Heart left ventricle (tissue), 16 donors: ENCODE measurements at regions of chr12 and their contacts with region 1.

Region 1: GRCh38 chr12:48765753-48766162 is 23.1 kb downstream of the ADCY6 start:
- DNase-seq: no peak
- ATAC-seq: peak in 1 of 4 donors; percentile 4
- H3K4me3 ChIP-seq: no peak overlapping the region
- H3K27ac ChIP-seq: peak overlapping the region in 6 of 12 donors; percentile 43 to 75 (median 66)
- H3K4me1 ChIP-seq: peaks cover 0 to 36% (median 21%) of the 10 kb centered on the region in 12 donors
- H3K27me3 ChIP-seq: no peaks in the 10 kb centered on the region
- CTCF ChIP-seq: no peak
- POLR2A ChIP-seq: no peak

Region 2: DNA sequence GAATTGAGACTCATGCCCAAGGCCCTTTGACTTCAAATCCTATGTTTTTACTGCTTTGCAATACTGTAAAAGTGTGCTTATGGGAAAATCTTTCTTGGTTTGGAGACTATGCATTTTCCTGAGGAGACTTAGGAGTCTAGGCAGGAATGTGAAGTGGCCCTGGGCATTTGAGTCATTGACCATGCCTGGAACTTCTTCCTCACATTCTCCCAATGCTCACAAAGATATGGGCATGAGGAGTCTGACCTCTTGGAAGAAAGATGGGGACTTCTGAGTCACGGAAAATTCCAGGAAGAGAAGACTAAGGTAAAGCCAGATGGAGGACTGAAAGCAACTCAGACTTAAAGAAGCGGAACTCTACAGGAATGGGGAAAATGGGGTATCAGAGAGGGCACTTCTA is 376.8 kb before region 1 on chr12:
- intact Hi-C with region 1: no loop called
- DNase-seq: no peak
- ATAC-seq: peak in 2 of 4 donors; percentile 49 to 51
- H3K4me3 ChIP-seq: no peak overlapping the region
- H3K27ac ChIP-seq: peak overlapping the region in 4 of 12 donors; percentile 1 to 51 (median 12)
- H3K4me1 ChIP-seq: peaks cover 0 to 28% (median 11%) of the 10 kb centered on the region in 12 donors
- H3K27me3 ChIP-seq: peaks cover 0 to 3% (median 0%) of the 10 kb centered on the region in 9 donors
- CTCF ChIP-seq: no peak
- POLR2A ChIP-seq: no peak

Region 3: GRCh38 chr12:48680861-48681260 is 84.9 kb before region 1 on chr12:
- intact Hi-C with region 1: no loop called
- DNase-seq: no peak
- ATAC-seq: no peak
- H3K4me3 ChIP-seq: peak overlapping the region; percentile 77 to 99 (median 92)
- H3K27ac ChIP-seq: peak overlapping the region in 1 of 12 donors; percentile 95
- H3K4me1 ChIP-seq: peaks cover 6 to 57% (median 44%) of the 10 kb centered on the region in 12 donors
- H3K27me3 ChIP-seq: no peaks in the 10 kb centered on the region
- CTCF ChIP-seq: no peak
- POLR2A ChIP-seq: no peak

Region 4: DNA sequence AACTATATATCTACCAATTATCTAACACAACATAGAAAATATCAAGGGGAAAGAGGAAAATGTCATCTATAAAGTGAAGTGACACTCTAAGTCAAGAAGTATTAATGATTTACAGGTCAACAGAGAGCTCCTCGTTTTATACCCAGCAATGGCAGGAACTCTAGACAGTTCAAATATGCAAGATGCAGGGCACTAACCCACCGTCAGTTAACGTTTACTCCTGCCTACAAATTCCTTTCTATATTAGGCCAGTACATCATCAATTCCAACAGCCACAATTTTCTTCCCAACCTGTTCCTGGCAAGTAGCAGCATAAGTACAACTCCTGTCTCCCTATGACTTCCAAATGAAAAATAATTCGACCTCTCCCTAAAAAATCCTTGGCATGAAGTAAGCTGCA is 74.8 kb before region 1 on chr12:
- intact Hi-C with region 1: no loop called
- DNase-seq: no peak
- ATAC-seq: peak in 3 of 4 donors; percentile 49 to 59 (median 51)
- H3K4me3 ChIP-seq: no peak overlapping the region
- H3K27ac ChIP-seq: peak overlapping the region in 7 of 12 donors; percentile 2 to 46 (median 31)
- H3K4me1 ChIP-seq: peaks cover 0 to 29% (median 14%) of the 10 kb centered on the region in 12 donors
- H3K27me3 ChIP-seq: no peaks in the 10 kb centered on the region
- CTCF ChIP-seq: no peak
- POLR2A ChIP-seq: no peak

Region 5: DNA sequence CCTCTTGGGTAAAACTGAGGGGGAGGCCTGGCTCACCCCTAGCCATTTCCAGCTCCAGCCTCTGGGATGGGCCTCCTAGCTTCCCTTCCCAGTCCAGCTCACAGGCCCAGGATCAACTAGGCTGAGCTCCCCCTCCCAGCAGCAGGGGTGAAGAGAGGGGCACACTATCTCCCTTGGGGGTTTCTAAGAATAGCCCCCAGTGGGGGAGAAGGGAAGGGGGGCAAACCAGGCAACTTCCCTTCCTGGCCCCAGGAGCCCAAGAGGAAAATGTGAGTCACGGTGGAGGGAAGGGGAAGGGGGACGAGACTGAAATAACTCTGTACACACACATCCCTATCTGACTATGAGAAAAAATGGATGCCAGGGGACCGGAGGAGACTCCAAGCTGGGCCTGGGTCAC is 14.1 kb after region 1 on chr12:
- intact Hi-C with region 1: loop called in 1 of 10 experiments (anchors 2 kb)
- DNase-seq: peak; percentile 81 to 92 (median 87)
- ATAC-seq: peak; percentile 78 to 84 (median 80)
- H3K4me3 ChIP-seq: peak overlapping the region in 4 of 12 donors; percentile 2 to 11 (median 8)
- H3K27ac ChIP-seq: peak overlapping the region; percentile 60 to 99 (median 94)
- H3K4me1 ChIP-seq: peaks cover 10 to 94% (median 64%) of the 10 kb centered on the region in 12 donors
- H3K27me3 ChIP-seq: no peaks in the 10 kb centered on the region
- CTCF ChIP-seq: no peak
- POLR2A ChIP-seq: no peak